OCI-LY7 (cell line): ENCODE measurements at regions of chr17 and their contacts with region 1.

Region 1: GRCh38 chr17:57401556-57402488 is 145.5 kb downstream of the MSI2 start:
- DNase-seq: peak; percentile 51
- H3K4me3 ChIP-seq: no peak overlapping the region
- H3K27ac ChIP-seq: no peak overlapping the region
- H3K4me1 ChIP-seq: peaks cover 53% of the 10 kb centered on the region
- CTCF ChIP-seq: peak; percentile 71

Region 2: GRCh38 chr17:57284984-57285646 is 116.7 kb before region 1 on chr17:
- CTCF ChIA-PET with region 1: no interaction called
- POLR2A ChIA-PET with region 1: no interaction called
- intact Hi-C with region 1: loop called (anchors 5 kb)
- DNase-seq: peak; percentile 77
- H3K4me3 ChIP-seq: peak overlapping the region; percentile 54
- H3K27ac ChIP-seq: peak overlapping the region; percentile 70
- H3K4me1 ChIP-seq: peaks cover 50% of the 10 kb centered on the region
- CTCF ChIP-seq: peak; percentile 30; the same call in 1 of the 2 replicates

Region 3: GRCh38 chr17:57879463-57880433 is 477.9 kb after region 1 on chr17:
- CTCF ChIA-PET with region 1: no interaction called
- POLR2A ChIA-PET with region 1: no interaction called
- intact Hi-C with region 1: no loop called
- DNase-seq: no peak
- H3K4me3 ChIP-seq: no peak overlapping the region
- H3K27ac ChIP-seq: no peak overlapping the region
- H3K4me1 ChIP-seq: peaks cover 10% of the 10 kb centered on the region
- CTCF ChIP-seq: no peak

Region 4: GRCh38 chr17:58066401-58066800 is 664.6 kb after region 1 on chr17:
- CTCF ChIA-PET with region 1: no interaction called
- POLR2A ChIA-PET with region 1: no interaction called
- intact Hi-C with region 1: no loop called
- DNase-seq: no peak
- H3K4me3 ChIP-seq: no peak overlapping the region
- H3K27ac ChIP-seq: no peak overlapping the region
- H3K4me1 ChIP-seq: no peaks in the 10 kb centered on the region
- CTCF ChIP-seq: no peak